GM12878 (cell line): ENCODE measurements at regions of chr1 and their contacts with region 1.

Region 1: DNA sequence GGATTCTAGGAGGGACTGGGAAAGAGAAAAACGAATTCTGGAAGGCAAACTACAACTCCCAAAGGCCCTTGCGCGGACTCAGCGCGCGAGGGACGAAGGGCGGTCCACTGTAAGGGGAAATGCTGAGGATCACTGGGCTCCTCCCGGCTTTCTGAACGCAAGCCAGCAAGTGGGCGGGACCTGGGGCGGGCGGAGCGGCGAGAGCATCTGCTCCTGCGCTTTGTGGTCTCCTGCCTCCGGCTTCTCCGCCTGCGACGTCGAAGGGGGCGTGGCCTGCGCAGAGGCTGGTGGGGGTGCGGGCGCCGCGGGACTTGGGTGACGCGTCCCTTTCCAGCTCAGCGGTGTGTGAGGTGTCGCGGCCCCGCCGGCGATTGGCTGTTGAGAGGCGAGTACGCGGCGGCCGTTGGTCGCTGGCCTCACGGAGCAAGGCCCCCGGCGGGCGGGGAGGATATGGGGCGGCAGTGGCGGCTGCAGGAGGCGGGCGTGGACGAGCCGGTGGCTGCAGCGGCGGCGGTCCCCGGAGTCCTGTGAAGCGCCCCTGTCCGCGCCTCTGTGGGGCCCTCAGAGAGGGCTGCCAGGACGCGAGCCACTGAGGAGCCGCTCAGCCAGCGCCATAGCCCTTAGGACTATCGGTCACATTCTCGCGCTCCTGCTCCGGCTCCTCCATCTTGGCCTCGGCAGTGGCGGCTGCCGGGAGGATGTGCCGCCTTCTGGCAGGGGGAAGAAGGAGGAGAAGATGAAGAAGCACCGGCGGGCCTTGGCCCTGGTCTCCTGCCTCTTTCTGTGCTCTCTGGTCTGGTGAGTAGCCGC is at the start of gene SUCO:
- DNase-seq: peak; percentile 96
- ATAC-seq: peak; percentile 89
- H3K4me3 ChIP-seq: peak within 1 kb of the TSS; percentile 93
- H3K27ac ChIP-seq: peak within 1 kb of the TSS; percentile 95
- H3K4me1 ChIP-seq: peaks cover 5% of the 10 kb centered on the region; the same call in 1 of the 2 replicates
- H3K27me3 ChIP-seq: no peaks in the 10 kb centered on the region
- CTCF ChIP-seq: no peak
- EP300 ChIP-seq: no peak; a peak in 1 of 4 replicates
- POLR2A ChIP-seq: peak; percentile 97
- RAD21 ChIP-seq: no peak
- polyA plus RNA-seq, gene SUCO: 1.7 to 2.6 TPM

Region 2: GRCh38 chr1:172469717-172470116 is 63.2 kb before region 1 on chr1:
- CTCF ChIA-PET with region 1: no interaction called
- POLR2A ChIA-PET with region 1: no interaction called
- RAD21 ChIA-PET with region 1: no interaction called
- SMC1A ChIA-PET with region 1: no interaction called
- in situ Hi-C with region 1: no loop called
- intact Hi-C with region 1: no loop called
- DNase-seq: no peak
- ATAC-seq: no peak
- H3K4me3 ChIP-seq: no peak overlapping the region
- H3K27ac ChIP-seq: no peak overlapping the region
- H3K4me1 ChIP-seq: no peaks in the 10 kb centered on the region
- H3K27me3 ChIP-seq: no peaks in the 10 kb centered on the region; a peak in 3 of 4 replicates
- CTCF ChIP-seq: no peak
- EP300 ChIP-seq: no peak
- POLR2A ChIP-seq: no peak
- RAD21 ChIP-seq: no peak

Region 3: GRCh38 chr1:172545396-172546004 is 12.6 kb after region 1 on chr1:
- CTCF ChIA-PET with region 1: interaction called, 5 read pairs
- POLR2A ChIA-PET with region 1: interaction called, 12 read pairs
- RAD21 ChIA-PET with region 1: interaction called, 10 read pairs
- SMC1A ChIA-PET with region 1: interaction called, 22 read pairs
- in situ Hi-C with region 1: no loop called
- intact Hi-C with region 1: no loop called
- DNase-seq: peak; percentile 32
- ATAC-seq: peak; percentile 87
- H3K4me3 ChIP-seq: no peak overlapping the region
- H3K27ac ChIP-seq: peak overlapping the region; percentile 42
- H3K4me1 ChIP-seq: peaks cover 20% of the 10 kb centered on the region
- H3K27me3 ChIP-seq: no peaks in the 10 kb centered on the region
- CTCF ChIP-seq: no peak
- EP300 ChIP-seq: no peak
- POLR2A ChIP-seq: no peak
- RAD21 ChIP-seq: no peak

Region 4: GRCh38 chr1:174005032-174005431 is 1472.1 kb after region 1 on chr1:
- CTCF ChIA-PET with region 1: no interaction called
- POLR2A ChIA-PET with region 1: no interaction called
- RAD21 ChIA-PET with region 1: no interaction called
- SMC1A ChIA-PET with region 1: no interaction called
- in situ Hi-C with region 1: no loop called
- intact Hi-C with region 1: no loop called
- DNase-seq: peak; percentile 83
- ATAC-seq: peak; percentile 95
- H3K4me3 ChIP-seq: no peak overlapping the region
- H3K27ac ChIP-seq: peak overlapping the region; percentile 54
- H3K4me1 ChIP-seq: peaks cover 10% of the 10 kb centered on the region
- H3K27me3 ChIP-seq: no peaks in the 10 kb centered on the region
- CTCF ChIP-seq: no peak
- EP300 ChIP-seq: peak; percentile 32 to 70; a peak in 1 of 4 replicates
- POLR2A ChIP-seq: no peak
- RAD21 ChIP-seq: no peak